H1 (cell line): ENCODE measurements at regions of chr20 and their contacts with region 1.

Region 1: DNA sequence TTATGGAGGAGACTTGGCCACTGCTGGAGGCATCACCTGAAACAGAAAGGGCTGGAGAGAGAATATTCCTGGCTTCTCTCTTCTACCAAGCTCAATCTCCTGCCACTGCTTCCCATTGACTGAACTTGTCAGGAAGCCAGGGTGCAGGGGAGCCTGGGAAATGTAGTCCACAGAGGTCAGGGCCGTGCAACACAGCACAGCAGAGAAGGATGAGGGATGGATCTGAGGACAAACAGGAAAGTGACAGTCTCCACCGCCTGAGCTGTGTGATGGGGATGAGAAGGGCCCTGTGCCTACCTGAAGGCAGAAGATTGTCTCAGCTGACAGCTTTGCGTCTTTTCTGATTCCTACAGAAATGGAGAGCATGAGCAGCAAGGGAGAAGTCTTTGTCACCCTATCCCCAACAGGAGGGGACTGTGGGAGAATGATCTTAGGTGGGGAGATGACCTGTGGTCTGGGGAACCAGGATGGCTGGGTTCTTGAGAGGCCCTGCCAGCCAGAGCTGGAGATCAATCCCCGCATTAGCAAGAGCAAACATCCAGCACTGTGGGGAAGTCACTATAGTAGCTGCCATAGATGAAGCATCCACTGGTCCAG is 114.2 kb downstream of the SNX5 start:
- DNase-seq: no peak
- H3K4me3 ChIP-seq: no peak overlapping the region
- H3K27ac ChIP-seq: no peak overlapping the region
- H3K4me1 ChIP-seq: peaks cover 1 to 10% (median 4%) of the 10 kb centered on the region in 4 experiments; a peak in 5 of 7 replicates
- H3K27me3 ChIP-seq: no peaks in the 10 kb centered on the region
- CTCF ChIP-seq: no peak
- EP300 ChIP-seq: no peak
- POLR2A ChIP-seq: no peak
- RAD21 ChIP-seq: no peak

Region 2: DNA sequence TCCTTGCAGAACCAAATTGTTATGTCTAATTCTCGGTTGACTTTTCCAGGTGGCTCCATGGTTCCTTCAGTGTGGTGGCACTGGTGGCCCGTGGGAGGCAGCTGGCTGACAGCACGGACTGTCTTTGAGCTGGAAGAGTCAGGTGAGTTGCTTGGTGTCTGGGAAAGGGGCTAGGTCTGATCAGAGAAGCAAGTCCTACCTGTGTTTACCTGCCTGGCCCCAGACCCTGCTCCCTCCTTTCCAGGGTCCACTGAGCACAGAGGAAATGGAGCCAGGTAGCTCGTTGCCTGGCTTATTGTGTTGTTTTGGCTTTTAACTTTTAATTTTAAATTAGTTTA is 42.8 kb before region 1 on chr20:
- CTCF ChIA-PET with region 1: no interaction called
- POLR2A ChIA-PET with region 1: no interaction called
- DNase-seq: no peak
- H3K4me3 ChIP-seq: no peak overlapping the region
- H3K27ac ChIP-seq: no peak overlapping the region
- H3K4me1 ChIP-seq: peaks cover 0 to 5% (median 3%) of the 10 kb centered on the region in 4 experiments; a peak in 4 of 7 replicates
- H3K27me3 ChIP-seq: no peaks in the 10 kb centered on the region
- CTCF ChIP-seq: no peak
- EP300 ChIP-seq: no peak
- POLR2A ChIP-seq: no peak
- RAD21 ChIP-seq: no peak

Region 3: DNA sequence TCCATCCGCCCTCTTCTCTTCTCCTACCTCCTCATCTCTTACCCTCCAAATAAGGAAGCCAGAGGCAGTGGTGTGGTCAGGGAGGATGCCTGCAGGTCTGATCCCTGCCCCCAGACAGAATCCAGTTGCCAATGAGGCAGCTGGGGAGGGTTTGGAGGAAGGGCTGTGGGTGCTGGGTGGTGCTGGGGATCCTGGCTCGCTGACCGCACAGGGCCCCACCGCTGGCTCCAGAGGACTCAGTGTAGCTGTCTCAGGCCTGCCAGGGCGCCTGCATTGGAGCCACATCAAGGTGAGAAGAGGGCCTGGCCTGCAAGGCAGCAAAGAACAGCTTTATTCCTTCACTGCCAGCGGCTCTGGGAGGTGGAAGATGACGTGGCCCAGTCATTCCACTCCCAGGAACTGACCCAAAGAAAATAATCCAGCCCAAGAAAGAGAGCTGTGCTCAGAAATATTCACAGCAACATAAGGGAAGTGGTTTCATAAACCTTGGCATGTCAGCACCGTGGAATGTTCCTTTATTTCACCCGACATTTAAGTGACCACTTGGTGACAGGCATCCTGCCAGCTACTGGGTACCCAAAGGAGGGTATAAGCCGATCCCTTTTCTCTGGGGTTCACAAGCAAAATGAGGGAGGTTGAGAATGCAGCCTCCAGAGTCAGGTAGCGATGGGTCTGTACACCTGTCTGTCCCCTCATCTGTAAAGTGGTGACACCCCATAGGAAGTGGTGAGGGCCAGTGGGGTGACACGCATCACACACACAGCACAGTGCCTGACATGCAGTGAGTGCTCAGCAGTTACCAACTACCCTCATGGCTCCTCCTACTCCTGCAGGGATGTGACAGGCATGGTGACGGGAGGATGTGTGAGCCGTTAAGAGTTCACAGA is 10.9 kb before region 1 on chr20:
- CTCF ChIA-PET with region 1: interaction called, 12 read pairs
- POLR2A ChIA-PET with region 1: interaction called, 3 read pairs
- DNase-seq: no peak
- H3K4me3 ChIP-seq: no peak overlapping the region
- H3K27ac ChIP-seq: no peak overlapping the region
- H3K4me1 ChIP-seq: peaks cover 0 to 4% (median 0%) of the 10 kb centered on the region in 4 experiments; a peak in 2 of 7 replicates
- H3K27me3 ChIP-seq: no peaks in the 10 kb centered on the region
- CTCF ChIP-seq: no peak
- EP300 ChIP-seq: no peak
- POLR2A ChIP-seq: no peak
- RAD21 ChIP-seq: no peak

Region 4: DNA sequence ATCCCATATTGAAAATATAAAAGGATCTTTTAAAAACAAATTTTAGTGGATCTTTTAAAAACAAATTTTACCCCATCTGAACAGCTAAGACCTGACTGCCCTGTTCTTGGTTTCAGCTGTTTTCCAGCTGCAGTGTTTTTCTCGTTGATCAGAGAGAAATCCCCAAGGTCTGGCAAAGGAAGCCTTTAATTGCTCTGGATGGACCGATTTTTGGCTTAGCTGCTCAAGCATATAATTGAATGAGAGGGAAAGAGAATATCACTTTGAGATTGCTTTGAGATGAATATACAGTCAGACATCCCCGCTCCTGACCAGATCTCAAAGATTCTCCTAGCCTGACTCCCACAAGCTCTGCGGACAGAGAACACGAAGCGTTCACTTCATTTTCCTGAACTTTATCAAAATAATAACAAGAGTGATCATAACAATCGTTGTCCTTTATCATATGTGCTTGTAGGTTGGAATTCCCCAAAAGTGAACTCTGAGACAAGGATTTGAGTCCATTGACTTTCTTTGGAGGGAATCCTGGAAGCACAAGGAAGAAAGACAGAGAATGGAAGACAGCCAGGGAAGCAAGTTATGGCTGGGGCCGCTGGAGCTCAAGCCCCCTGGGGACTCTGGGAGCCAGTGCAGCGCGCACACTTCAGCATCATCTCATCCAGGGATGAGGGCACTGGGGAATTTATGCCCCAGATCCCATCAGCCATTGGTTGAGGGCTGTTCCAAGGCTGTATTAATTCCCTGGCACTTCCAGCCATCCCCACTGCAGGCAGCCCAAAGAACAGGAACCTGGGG is 12.9 kb after region 1 on chr20:
- CTCF ChIA-PET with region 1: interaction called, 24 read pairs
- POLR2A ChIA-PET with region 1: interaction called, 6 read pairs
- DNase-seq: no peak
- H3K4me3 ChIP-seq: no peak overlapping the region
- H3K27ac ChIP-seq: no peak overlapping the region
- H3K4me1 ChIP-seq: peaks cover 10 to 25% (median 18%) of the 10 kb centered on the region in 4 experiments
- H3K27me3 ChIP-seq: no peaks in the 10 kb centered on the region
- CTCF ChIP-seq: no peak
- EP300 ChIP-seq: no peak
- POLR2A ChIP-seq: no peak
- RAD21 ChIP-seq: no peak

Region 5: DNA sequence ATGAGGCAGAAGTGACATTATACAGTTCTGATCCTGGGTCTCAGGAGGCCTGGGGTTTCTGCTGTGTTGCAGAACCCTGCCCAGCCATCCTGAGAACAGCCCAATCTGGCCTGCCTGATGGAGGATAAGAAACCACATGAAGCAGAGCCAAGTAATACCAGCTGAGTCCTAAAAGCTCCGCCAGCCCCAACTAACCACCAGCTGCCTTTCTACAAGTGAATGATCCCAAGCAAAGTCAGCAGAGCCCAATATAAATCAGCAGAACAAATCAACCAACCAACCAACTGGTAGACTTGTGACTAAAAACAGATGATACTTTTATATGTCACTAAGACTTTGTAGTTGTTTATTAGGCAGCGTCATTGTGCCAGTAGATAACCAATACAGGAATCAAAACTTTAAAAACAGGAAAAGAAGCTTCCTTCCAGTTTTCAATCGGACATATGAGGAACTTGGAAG is 62.1 kb after region 1 on chr20:
- CTCF ChIA-PET with region 1: no interaction called
- POLR2A ChIA-PET with region 1: no interaction called
- DNase-seq: no peak
- H3K4me3 ChIP-seq: no peak overlapping the region
- H3K27ac ChIP-seq: no peak overlapping the region
- H3K4me1 ChIP-seq: no peaks in the 10 kb centered on the region
- H3K27me3 ChIP-seq: no peaks in the 10 kb centered on the region
- CTCF ChIP-seq: no peak
- EP300 ChIP-seq: no peak
- POLR2A ChIP-seq: no peak
- RAD21 ChIP-seq: no peak